ENCODE measurements at regions of chr17 and their contacts with region 1.

Region 1: GRCh38 chr17:53217311-53217710 is 605.4 kb upstream of the KIF2B start:
- DNase-seq: no peak
- H3K4me3 ChIP-seq: no peak overlapping the region
- H3K27ac ChIP-seq: no peak overlapping the region
- H3K4me1 ChIP-seq: no peaks in the 10 kb centered on the region
- H3K27me3 ChIP-seq: no peaks in the 10 kb centered on the region
- CTCF ChIP-seq: no peak
- EP300 ChIP-seq: no peak
- POLR2A ChIP-seq: no peak

Region 2: GRCh38 chr17:52986056-52986662 is 231.2 kb before region 1 on chr17:
- in situ Hi-C with region 1: no loop called
- intact Hi-C with region 1: no loop called
- DNase-seq: no peak
- H3K4me3 ChIP-seq: no peak overlapping the region
- H3K27ac ChIP-seq: no peak overlapping the region
- H3K4me1 ChIP-seq: peaks cover 0 to 9% (median 2%) of the 10 kb centered on the region in 4 donors
- H3K27me3 ChIP-seq: no peaks in the 10 kb centered on the region
- CTCF ChIP-seq: no peak
- EP300 ChIP-seq: no peak
- POLR2A ChIP-seq: no peak

Region 3: GRCh38 chr17:53253956-53254597 is 36.8 kb after region 1 on chr17:
- in situ Hi-C with region 1: no loop called
- intact Hi-C with region 1: loop called (anchors 5 kb)
- DNase-seq: no peak
- H3K4me3 ChIP-seq: no peak overlapping the region
- H3K27ac ChIP-seq: no peak overlapping the region
- H3K4me1 ChIP-seq: no peaks in the 10 kb centered on the region
- H3K27me3 ChIP-seq: no peaks in the 10 kb centered on the region
- CTCF ChIP-seq: no peak
- EP300 ChIP-seq: no peak
- POLR2A ChIP-seq: no peak

Region 4: DNA sequence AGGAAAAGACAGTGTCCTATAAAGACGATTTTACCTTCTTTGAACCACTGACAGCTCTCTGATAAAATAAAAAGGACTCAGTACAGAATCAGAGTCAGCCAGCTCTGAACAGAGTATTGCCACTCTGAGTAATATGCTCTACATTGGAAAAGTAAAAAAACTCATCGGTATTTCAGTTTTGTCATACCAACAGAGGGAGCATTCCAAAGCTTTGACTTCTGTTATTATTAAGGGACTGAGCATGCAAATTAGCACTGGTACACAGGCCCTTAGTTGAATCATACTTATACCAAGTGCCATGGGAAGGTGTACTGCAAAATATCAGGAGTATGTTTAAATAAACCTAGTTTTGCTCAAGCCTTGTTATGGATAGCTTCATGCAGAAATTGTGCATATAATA is 96.4 kb after region 1 on chr17:
- in situ Hi-C with region 1: loop called in 1 of 4 experiments (anchors 25 kb)
- intact Hi-C with region 1: no loop called
- DNase-seq: no peak
- H3K4me3 ChIP-seq: no peak overlapping the region
- H3K27ac ChIP-seq: no peak overlapping the region
- H3K4me1 ChIP-seq: no peaks in the 10 kb centered on the region
- H3K27me3 ChIP-seq: no peaks in the 10 kb centered on the region
- CTCF ChIP-seq: no peak
- EP300 ChIP-seq: no peak
- POLR2A ChIP-seq: no peak